Caco-2 (cell line): ENCODE measurements at regions of chrX and their contacts with region 1.

Region 1: GRCh38 chrX:10591363-10592335 is 28.7 kb downstream of the MID1 start:
- DNase-seq: no peak
- H3K4me3 ChIP-seq: no peak overlapping the region
- H3K4me3 Mint-ChIP-seq: no peak overlapping the region
- H3K27ac Mint-ChIP-seq: peak overlapping the region; percentile 53
- H3K4me1 ChIP-seq: peaks cover 14% of the 10 kb centered on the region; the same call in 1 of the 2 replicates
- H3K4me1 Mint-ChIP-seq: peaks cover 13% of the 10 kb centered on the region
- H3K27me3 ChIP-seq: no peaks in the 10 kb centered on the region
- H3K27me3 Mint-ChIP-seq: no peaks in the 10 kb centered on the region
- CTCF ChIP-seq: no peak

Region 2: DNA sequence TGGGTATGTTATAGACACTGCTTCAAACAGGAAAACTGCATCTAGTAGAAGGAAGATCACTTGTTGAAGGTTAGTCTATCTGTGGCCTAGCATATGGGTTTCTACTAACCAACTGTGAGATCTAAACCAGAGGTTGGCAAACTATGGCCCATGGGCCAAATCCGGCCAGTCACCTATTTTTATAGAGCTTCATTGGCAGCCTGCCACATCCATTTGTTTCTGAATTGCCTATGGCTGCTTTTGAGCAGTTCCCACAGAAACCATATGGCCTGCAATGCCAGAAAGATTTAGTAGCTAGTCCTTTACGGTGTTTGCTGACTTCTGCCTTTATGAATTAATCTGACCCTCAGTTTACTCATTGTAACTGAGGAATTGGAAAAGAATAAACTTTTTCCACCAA is 42.4 kb before region 1 on chrX:
- CTCF ChIA-PET with region 1: no interaction called
- POLR2A ChIA-PET with region 1: no interaction called
- intact Hi-C with region 1: loop called (anchors 5 kb)
- DNase-seq: no peak
- H3K4me3 ChIP-seq: no peak overlapping the region
- H3K4me3 Mint-ChIP-seq: no peak overlapping the region
- H3K27ac Mint-ChIP-seq: no peak overlapping the region
- H3K4me1 ChIP-seq: peaks cover 24% of the 10 kb centered on the region
- H3K4me1 Mint-ChIP-seq: peaks cover 14% of the 10 kb centered on the region
- H3K27me3 ChIP-seq: no peaks in the 10 kb centered on the region
- H3K27me3 Mint-ChIP-seq: no peaks in the 10 kb centered on the region
- CTCF ChIP-seq: no peak